ENCODE measurements at regions of chr1 and their contacts with region 1.

Region 1: GRCh38 chr1:209692745-209693504 is 11.7 kb upstream of the HSD11B1 start:
- DNase-seq: peak; percentile 79 to 82
- ATAC-seq: peak; percentile 76
- H3K4me3 ChIP-seq: no peak overlapping the region
- H3K27ac ChIP-seq: no peak overlapping the region
- H3K4me1 ChIP-seq: no peaks in the 10 kb centered on the region
- H3K27me3 ChIP-seq: peaks cover 0 to 1% of the 10 kb centered on the region in 2 donors

Region 2: DNA sequence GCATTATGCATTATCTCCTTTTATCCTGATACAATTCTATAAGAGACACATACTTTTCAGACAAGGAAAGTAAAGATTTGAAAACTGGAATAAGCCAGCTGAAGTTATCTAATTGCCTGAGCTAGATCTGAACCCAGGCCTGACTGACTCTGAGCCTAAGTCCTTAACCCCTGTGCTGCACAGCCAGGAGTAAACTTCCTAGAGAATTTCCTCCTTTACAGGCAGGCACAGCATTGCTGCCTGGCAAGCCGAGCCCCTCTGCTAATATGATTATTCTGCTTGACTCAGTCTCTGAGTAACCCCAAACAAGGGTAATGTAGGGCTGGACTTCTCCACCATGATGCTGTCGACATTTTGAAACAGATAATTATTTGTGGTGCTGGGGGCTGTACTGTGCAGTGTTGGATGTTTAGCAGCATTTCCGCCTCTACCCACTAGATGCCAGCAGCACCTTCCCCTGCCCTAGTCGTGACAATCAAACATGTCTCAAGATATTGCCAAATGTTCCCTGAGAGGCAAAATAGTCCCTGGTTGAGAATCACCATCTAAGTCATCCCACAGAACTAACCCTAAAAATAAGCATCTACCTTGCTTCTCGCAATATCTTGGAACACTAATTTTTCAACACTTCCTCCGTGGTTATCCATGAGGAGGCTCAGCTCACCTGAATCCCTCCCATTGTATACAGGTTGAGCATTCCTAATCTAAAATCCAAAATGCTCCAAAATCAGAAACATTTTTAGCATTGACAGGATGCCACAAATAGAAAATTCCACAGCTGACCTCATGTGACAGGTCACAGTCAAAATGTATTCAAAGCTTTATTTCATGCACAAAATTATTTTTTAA is 90.9 kb before region 1 on chr1:
- intact Hi-C with region 1: loop called (anchors 2 to 10 kb)
- DNase-seq: no peak
- ATAC-seq: no peak
- H3K4me3 ChIP-seq: no peak overlapping the region
- H3K27ac ChIP-seq: no peak overlapping the region
- H3K4me1 ChIP-seq: no peaks in the 10 kb centered on the region
- H3K27me3 ChIP-seq: peaks cover 0 to 1% of the 10 kb centered on the region in 2 donors

Region 3: DNA sequence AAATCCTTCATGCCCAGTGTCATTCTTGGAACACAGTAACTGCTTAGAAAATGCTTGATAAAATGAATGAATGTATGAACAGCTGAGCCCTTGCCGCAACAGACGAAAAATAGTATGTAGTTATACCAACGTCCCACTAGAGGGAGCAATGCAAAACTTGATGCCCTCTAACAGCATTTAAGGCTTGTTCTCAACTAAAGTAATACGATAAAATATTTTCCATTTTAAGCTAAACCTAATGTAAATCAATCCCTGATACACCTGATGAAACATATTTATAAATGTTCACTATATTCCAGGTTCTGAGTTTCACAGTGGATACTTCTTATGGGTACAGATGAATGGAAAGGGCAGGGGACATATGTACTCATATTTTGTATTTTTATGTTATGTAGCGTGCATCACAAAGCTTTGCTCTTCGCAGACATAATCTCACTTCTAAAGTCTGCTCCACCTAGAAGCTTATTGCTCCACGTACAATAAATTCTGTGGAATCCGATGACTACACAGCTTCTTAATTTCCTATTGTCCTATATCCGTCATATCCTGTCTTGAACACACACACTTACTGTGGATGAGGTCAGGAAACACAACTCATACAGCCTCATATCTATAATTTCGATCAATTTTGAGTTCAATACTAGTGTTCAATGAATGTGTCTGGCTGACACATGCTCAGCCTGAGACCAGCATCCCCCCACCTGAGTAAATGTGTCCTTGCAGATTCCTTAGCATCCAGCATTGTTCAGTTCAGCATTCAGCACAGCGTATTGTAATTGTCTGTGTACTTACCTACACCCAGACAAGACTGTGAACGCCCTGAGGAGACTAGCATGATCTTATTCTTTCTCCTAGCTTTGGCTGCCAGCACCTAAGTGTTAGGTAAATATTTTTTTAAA is 130.5 kb after region 1 on chr1:
- intact Hi-C with region 1: no loop called
- DNase-seq: no peak
- ATAC-seq: no peak
- H3K4me3 ChIP-seq: no peak overlapping the region
- H3K27ac ChIP-seq: no peak overlapping the region
- H3K4me1 ChIP-seq: no peaks in the 10 kb centered on the region
- H3K27me3 ChIP-seq: no peaks in the 10 kb centered on the region